CD4-positive, alpha-beta memory T cell (primary cell): ENCODE measurements at regions of chr17 and their contacts with region 1.

Region 1: DNA sequence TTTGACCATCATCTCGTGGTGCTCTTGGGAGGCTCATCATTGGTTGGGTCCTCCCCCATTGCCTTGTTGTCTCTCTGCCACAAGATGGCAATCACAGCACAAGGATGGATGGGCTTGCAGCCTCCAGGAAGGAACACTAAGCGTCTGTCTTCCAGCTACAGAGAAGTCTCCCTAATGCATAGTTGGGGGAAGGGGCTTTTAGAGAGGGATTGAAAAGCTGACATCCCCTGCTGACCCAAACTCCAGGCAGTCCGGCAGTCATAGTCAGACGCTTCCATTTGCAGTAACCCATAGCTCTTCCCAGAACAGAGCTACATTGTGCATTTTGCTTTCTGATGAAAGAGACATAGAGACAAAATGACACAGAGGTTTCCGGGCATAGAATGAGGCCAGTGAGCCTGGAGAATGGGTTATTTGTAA is 111.4 kb downstream of the UTP18 start:
- DNase-seq: peak; percentile 41 to 57 (median 47)
- H3K4me3 ChIP-seq: no peak overlapping the region
- H3K4me3 Mint-ChIP-seq: peak overlapping the region in 3 of 8 donors; percentile 40 to 67 (median 40)
- H3K27ac ChIP-seq: no peak overlapping the region
- H3K27ac Mint-ChIP-seq: peak overlapping the region in 4 of 7 donors; percentile 1 to 48 (median 28)
- H3K4me1 ChIP-seq: peaks cover 11% of the 10 kb centered on the region
- H3K4me1 Mint-ChIP-seq: peaks cover 7 to 12% (median 11%) of the 10 kb centered on the region in 4 donors
- H3K27me3 ChIP-seq: no peaks in the 10 kb centered on the region
- H3K27me3 Mint-ChIP-seq: peaks cover 0 to 2% of the 10 kb centered on the region in 2 donors

Region 2: DNA sequence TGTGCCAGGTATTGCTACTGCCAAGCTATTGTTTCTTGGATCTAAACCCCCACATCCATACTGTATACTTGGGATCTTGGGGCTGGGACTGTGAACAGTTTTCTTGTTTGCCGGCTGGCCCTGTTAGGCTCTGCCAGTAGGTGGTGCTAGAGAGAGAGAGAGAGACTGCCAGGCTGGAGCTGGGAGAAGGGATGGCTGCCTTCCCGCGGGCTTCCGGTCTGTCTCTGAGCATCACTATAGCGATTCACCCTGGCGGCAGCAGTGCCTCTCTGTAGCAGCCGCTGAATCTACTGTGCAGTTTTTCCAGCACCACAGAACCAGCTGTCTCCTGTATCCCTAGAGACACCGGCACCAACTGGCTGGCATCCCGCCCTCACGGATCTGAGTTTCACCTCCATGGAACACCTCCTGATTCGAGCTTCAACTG is 89.8 kb after region 1 on chr17:
- CTCF ChIA-PET with region 1: interaction called, 10 read pairs
- POLR2A ChIA-PET with region 1: no interaction called
- intact Hi-C with region 1: no loop called
- DNase-seq: peak; percentile 29 to 56 (median 36)
- H3K4me3 ChIP-seq: no peak overlapping the region
- H3K4me3 Mint-ChIP-seq: no peak overlapping the region
- H3K27ac ChIP-seq: no peak overlapping the region
- H3K27ac Mint-ChIP-seq: no peak overlapping the region
- H3K4me1 ChIP-seq: no peaks in the 10 kb centered on the region
- H3K4me1 Mint-ChIP-seq: no peaks in the 10 kb centered on the region
- H3K27me3 ChIP-seq: no peaks in the 10 kb centered on the region
- H3K27me3 Mint-ChIP-seq: peaks cover 2 to 3% of the 10 kb centered on the region in 2 donors

Region 3: DNA sequence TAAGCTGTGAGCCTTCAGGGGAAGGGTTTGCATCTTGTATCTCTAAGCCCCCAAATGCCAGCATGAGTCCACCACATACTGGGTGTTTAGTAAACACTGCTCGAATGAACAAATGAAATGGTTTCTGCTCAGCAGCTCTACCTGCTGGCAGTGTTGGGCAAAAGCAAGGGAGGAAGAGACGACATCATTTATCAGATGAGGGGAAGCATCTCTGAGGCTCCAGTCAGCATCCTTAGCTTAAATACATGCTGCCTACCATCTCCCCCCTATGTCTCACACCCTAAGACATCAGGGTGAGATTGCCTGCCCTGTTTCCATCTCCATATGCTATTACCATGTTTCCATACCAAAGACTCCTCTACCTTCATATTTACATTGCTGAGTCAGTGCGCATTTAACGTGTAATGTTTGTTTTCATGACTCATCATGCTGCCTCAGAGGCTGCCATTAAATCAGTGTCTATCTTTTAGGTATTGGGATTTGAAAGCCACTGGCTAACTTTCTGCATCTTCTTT is 268.4 kb after region 1 on chr17:
- CTCF ChIA-PET with region 1: interaction called, 20 read pairs
- POLR2A ChIA-PET with region 1: interaction called, 6 read pairs
- intact Hi-C with region 1: no loop called
- DNase-seq: peak in 2 of 5 donors; percentile 1 to 5
- H3K4me3 ChIP-seq: no peak overlapping the region
- H3K4me3 Mint-ChIP-seq: no peak overlapping the region
- H3K27ac ChIP-seq: no peak overlapping the region
- H3K27ac Mint-ChIP-seq: no peak overlapping the region
- H3K4me1 ChIP-seq: no peaks in the 10 kb centered on the region
- H3K4me1 Mint-ChIP-seq: no peaks in the 10 kb centered on the region
- H3K27me3 ChIP-seq: no peaks in the 10 kb centered on the region
- H3K27me3 Mint-ChIP-seq: peaks cover 11 to 24% of the 10 kb centered on the region in 2 donors

Region 4: DNA sequence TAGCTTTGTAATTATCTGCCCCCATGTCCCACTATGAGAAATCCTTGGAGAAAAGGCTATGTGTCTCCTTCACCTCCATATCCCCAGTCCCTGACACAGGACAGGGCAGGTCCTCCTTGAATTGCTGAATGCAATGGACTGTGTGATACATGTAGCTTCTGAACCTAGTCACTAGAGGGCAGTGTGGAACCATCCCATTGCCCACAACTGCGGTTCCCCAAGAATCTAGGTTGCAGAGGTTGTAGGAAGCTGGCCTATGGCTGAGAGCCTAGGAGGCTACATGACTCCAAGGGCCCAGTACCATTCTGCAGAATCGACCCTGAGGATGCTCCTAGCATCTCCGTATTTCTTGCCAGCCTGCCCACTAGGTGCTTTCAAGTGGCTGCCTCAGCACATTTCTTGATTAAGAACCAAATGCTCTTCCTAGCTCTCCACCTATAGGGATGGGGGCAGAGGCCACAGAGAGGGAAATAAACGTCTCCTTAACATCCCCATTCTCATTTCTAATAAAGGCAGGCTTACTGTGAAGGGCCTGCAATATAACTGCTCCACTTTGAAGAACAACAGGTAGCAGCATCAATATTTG is 392.7 kb after region 1 on chr17:
- CTCF ChIA-PET with region 1: interaction called, 5 read pairs
- POLR2A ChIA-PET with region 1: no interaction called
- intact Hi-C with region 1: loop called (anchors 5 kb)
- DNase-seq: peak in 4 of 5 donors; percentile 24 to 43 (median 34)
- H3K4me3 ChIP-seq: no peak overlapping the region
- H3K4me3 Mint-ChIP-seq: no peak overlapping the region
- H3K27ac ChIP-seq: no peak overlapping the region
- H3K27ac Mint-ChIP-seq: no peak overlapping the region
- H3K4me1 ChIP-seq: no peaks in the 10 kb centered on the region
- H3K4me1 Mint-ChIP-seq: no peaks in the 10 kb centered on the region
- H3K27me3 ChIP-seq: no peaks in the 10 kb centered on the region
- H3K27me3 Mint-ChIP-seq: peaks cover 14 to 15% of the 10 kb centered on the region in 2 donors